ENCODE measurements at regions of chr2 and their contacts with region 1.

Region 1: DNA sequence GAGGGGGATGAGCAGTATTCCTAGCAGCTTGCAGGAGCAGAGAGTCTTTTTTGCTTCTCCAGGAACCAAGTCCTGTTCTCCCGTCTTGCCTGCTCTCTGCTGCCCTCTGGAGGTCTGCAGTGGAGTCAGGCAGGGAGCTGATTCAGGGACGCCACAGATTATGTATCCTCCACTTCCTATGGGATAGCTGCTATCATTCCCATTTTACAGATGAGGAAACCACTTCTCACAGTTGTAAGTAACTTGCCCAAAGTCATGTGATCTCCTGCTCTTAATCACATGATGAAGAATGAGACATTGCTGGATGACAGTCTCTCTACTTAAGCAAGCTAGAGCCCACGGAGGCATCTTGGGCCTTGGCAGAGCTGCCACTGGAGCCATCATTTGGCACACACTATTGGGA is 8.3 kb downstream of the SLC4A5 start:
- DNase-seq: peak; percentile 56
- H3K4me3 Mint-ChIP-seq: no peak overlapping the region
- H3K27ac Mint-ChIP-seq: no peak overlapping the region
- H3K4me1 Mint-ChIP-seq: no peaks in the 10 kb centered on the region
- H3K27me3 Mint-ChIP-seq: peaks cover 6% of the 10 kb centered on the region

Region 2: DNA sequence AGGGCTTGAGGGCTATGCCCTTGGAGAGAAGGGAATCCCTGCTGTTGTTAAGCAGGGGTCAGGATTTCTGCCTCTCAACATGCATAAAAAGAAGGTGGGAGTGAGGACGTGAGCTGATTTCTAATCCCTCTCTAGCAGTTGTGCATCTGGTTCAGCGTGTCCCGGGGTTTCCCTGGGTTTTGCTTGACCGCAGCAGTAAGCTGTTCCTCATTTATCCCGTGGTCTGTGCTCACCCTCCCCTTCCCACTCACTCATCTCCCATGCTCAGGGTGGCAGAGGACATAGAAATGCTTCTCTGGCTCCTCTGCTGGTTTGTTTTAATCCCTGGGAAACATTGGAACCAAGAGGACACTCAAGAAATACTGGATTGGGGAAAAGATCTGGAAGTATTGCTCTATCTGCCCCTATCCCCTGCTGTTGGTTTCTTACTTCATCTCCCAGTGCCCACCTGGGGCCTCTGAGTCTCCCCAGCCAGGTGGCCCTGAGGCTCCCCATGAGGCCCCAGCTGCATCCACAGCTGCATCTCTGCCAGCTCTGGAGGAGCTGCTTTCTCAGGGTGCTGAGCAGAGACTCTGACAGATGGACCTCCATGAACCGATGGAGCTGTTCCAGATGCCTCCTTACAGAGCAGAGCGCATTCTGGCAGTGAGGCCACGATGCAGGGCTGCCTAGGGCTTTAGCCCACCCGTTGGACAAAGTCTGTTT is 314.1 kb before region 1 on chr2:
- intact Hi-C with region 1: no loop called
- DNase-seq: no peak
- H3K4me3 Mint-ChIP-seq: no peak overlapping the region
- H3K27ac Mint-ChIP-seq: no peak overlapping the region
- H3K4me1 Mint-ChIP-seq: peaks cover 35% of the 10 kb centered on the region
- H3K27me3 Mint-ChIP-seq: no peaks in the 10 kb centered on the region

Region 3: DNA sequence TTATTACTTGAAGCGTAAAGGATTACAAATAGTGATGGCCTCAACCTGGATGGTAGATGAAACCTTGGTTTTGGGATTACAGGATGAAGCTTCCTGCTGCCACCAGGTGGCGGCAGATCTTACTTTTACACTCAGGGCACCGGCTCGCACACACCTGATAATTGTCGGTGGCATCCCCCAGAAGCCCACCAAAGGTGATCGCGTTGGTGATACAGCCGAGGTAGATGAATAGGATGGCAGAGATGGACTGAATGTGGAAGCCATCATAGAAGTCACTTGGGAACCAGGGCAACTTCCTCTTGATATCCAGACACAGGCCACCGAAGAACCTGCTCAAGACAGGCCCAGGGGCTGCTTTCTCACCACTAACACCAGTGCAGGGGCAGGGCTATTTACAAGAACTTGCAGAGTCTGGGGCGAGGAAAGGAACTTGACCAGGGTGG is 84.7 kb before region 1 on chr2:
- intact Hi-C with region 1: loop called (anchors 1 kb)
- DNase-seq: peak; percentile 38
- H3K4me3 Mint-ChIP-seq: no peak overlapping the region
- H3K27ac Mint-ChIP-seq: no peak overlapping the region
- H3K4me1 Mint-ChIP-seq: no peaks in the 10 kb centered on the region
- H3K27me3 Mint-ChIP-seq: peaks cover 3% of the 10 kb centered on the region

Region 4: DNA sequence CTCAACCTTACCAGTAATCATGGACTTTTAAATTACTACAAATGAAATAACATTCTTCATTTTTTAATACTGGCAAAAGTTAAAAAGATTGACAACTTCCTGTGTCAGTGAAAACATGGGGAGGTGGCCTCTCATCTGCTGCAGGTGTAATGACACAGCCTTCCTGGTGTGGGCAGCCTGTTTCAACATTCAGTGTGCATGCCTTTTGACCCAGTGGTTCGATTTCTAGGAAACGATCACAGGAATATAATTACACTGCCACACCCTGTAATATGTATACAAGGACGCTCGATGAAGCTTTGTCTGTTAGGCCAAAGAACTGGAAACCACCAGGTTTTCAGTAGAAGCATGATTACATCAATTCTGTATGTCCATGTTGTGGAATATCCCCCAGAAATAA is 67.9 kb before region 1 on chr2:
- intact Hi-C with region 1: loop called (anchors 1 kb)
- DNase-seq: peak; percentile 65
- H3K4me3 Mint-ChIP-seq: no peak overlapping the region
- H3K27ac Mint-ChIP-seq: peak overlapping the region; percentile 76
- H3K4me1 Mint-ChIP-seq: peaks cover 13% of the 10 kb centered on the region
- H3K27me3 Mint-ChIP-seq: no peaks in the 10 kb centered on the region

Region 5: GRCh38 chr2:74317701-74318301 is 17.1 kb before region 1 on chr2:
- intact Hi-C with region 1: no loop called
- DNase-seq: no peak
- H3K4me3 Mint-ChIP-seq: no peak overlapping the region
- H3K27ac Mint-ChIP-seq: no peak overlapping the region
- H3K4me1 Mint-ChIP-seq: no peaks in the 10 kb centered on the region
- H3K27me3 Mint-ChIP-seq: peaks cover 1% of the 10 kb centered on the region

Measured in activated T-helper 2 cell treated with anti-CD3 and anti-CD28 coated beads, Interferon-gamma antibody, Interleukin-2, Interleukin-4, amounts not matched to agents 10 μg/mL and 5 μg/mL and 100 μg/mL, durations not matched to agents 14 hours and 24 hours and 36 hours (primary cell).